Heart right ventricle (tissue), 16 donors: ENCODE measurements at regions of chr1 and their contacts with region 1.

Region 1: DNA sequence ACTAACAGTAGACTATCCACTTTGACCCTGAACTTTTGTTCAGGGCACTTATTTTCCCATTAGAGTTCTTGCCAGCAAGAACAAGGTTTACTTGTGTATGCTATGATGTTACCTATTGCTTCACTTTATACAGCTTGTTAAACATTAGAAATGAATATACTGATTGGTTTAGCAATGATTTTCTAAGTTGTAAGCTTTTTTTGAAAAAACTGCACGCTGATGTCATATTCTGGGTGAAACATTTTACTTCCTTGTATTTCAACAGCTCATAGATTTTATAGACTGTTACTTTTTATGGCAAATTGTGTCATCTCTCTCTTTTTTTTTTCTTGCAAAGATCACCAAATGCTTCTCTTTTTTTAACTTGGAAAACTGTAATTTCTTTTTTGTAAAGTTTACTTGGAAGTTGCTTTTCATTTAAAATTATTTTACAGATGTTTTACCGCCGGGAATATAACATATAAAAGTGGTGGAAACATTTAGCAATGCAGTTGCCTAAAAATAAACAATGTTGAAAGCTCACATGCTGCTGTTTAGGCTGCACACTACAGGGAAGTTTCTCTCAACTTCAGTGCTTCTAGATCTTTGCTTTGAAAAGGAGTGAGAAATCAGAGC is 215.3 kb upstream of the NFIA start:
- DNase-seq: no peak
- ATAC-seq: peak in 4 of 8 donors; percentile 35 to 69 (median 48)
- H3K4me3 ChIP-seq: peak overlapping the region in 5 of 10 donors; percentile 1 to 44 (median 8)
- H3K27ac ChIP-seq: peak overlapping the region in 3 of 10 donors; percentile 1 to 66 (median 11)
- H3K4me1 ChIP-seq: peaks cover 0 to 28% (median 7%) of the 10 kb centered on the region in 9 donors
- H3K27me3 ChIP-seq: peaks cover 0 to 5% (median 0%) of the 10 kb centered on the region in 7 donors
- CTCF ChIP-seq: no peak

Region 2: DNA sequence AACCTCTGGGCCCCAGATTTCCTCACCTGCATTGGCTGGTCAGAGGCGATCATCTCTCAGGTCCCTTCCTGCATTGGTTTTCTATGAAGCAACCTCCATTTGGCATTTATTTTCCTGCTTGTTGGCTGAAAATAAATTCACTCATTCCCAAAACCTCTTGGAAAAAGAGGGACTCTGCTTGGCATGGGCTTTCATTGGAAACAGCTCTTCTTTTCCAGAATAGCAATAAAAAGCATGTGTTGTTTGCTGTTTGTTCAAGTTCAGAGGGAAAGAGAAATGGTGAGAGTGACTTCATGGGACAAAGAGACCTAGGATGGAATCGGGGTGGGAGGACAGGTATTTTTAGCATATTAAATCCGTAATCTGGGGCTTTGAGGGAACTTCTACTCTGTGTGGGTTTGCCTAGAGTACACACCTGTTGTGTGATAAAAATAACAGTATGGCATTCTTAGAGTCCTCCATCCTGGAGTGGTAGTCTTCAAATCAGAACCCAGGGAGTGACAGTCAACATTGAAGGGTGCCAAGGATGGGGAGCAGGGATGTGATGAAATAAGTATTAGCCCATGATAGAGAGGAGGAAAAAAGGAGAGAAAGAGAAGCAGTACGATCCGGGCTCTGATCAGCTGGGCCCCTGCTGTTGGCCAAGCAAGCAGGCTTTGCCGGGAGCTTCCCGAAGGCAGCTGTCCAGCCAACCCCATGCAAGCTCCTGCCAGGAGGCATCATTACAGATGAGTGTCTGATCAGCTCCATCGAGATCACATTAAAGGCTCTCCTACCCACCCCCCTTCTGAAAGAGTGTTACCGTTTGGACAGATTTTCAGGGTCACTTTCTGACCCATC is 83.4 kb after region 1 on chr1:
- intact Hi-C with region 1: loop called in 1 of 10 experiments (anchors 10 kb)
- DNase-seq: peak in 1 of 2 donors; percentile 12
- ATAC-seq: peak in 1 of 8 donors; percentile 20
- H3K4me3 ChIP-seq: no peak overlapping the region
- H3K27ac ChIP-seq: no peak overlapping the region
- H3K4me1 ChIP-seq: peaks cover 0 to 30% (median 11%) of the 10 kb centered on the region in 9 donors
- H3K27me3 ChIP-seq: no peaks in the 10 kb centered on the region
- CTCF ChIP-seq: no peak

Region 3: DNA sequence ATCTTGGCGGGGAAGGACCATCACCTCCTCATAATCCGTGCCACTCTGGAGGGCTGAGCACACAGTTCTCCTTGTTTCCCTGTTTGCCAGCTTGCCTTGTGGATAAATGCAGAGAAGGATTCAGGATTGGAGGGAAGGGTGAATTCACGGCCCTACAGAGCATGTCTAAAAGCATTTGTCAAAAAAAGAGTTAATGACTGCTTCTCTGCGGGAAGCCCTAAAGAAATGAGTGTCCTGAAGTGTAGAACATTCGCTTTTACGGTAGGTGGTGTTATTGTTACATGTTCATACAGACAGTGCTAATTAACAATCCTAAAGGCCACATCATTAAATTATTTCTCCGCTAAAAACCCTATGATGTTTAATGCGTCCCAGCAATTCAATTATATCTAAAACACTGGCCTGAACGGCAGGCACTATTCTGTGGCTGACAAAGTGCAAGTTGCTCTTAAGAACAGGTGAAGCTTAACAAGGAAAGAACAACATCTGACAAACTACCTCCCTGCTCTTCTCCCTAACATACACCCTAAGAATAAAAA is 103.0 kb after region 1 on chr1:
- intact Hi-C with region 1: loop called in 1 of 10 experiments (anchors 10 kb)
- DNase-seq: no peak
- ATAC-seq: peak; percentile 52 to 83 (median 75)
- H3K4me3 ChIP-seq: peak overlapping the region in 1 of 10 donors; percentile 10
- H3K27ac ChIP-seq: peak overlapping the region in 7 of 10 donors; percentile 41 to 76 (median 66)
- H3K4me1 ChIP-seq: peaks cover 0 to 14% (median 8%) of the 10 kb centered on the region in 9 donors
- H3K27me3 ChIP-seq: no peaks in the 10 kb centered on the region
- CTCF ChIP-seq: peak; percentile 17 to 70 (median 60)